Heart left ventricle (tissue), 16 donors: ENCODE measurements at regions of chr6 and their contacts with region 1.

Region 1: DNA sequence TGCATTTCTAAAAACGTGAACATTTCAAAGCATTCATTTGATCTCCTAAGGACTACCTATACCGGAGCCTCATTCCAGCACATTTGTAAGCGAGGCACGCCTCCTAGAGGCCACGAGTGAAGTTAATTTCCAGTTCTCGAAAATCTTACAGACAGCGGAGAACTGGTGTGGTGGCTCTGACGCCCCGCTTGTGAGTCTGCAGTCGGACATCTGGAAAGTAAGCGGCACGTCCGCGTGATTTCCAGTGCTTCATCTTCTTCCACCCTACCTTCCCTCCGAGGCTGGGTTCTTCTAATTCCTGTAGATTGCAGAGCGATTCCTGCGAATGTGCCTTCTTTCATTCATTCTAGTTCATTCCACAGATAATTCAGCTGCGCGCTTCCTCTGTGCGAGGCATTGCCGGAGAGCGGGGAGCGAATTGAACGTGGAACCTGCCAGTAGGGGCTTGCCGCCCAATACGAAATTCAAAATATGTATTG is 810 bp upstream of the PRIM2 start:
- DNase-seq: peak; percentile 77 to 85 (median 81)
- ATAC-seq: peak; percentile 88 to 96 (median 93)
- H3K4me3 ChIP-seq: peak overlapping the region; percentile 57 to 76 (median 69)
- H3K27ac ChIP-seq: peak overlapping the region in 11 of 12 donors; percentile 11 to 74 (median 61)
- H3K4me1 ChIP-seq: peaks cover 0 to 21% (median 9%) of the 10 kb centered on the region in 12 donors
- H3K27me3 ChIP-seq: no peaks in the 10 kb centered on the region
- CTCF ChIP-seq: peak; percentile 70 to 91 (median 79)
- POLR2A ChIP-seq: no peak

Region 2: GRCh38 chr6:56955171-56956045 is 361.2 kb before region 1 on chr6:
- intact Hi-C with region 1: loop called in 2 of 10 experiments (anchors 2 to 5 kb)
- DNase-seq: peak; percentile 73 to 87 (median 79)
- ATAC-seq: peak; percentile 72 to 86 (median 82)
- H3K4me3 ChIP-seq: peak overlapping the region; percentile 30 to 85 (median 58)
- H3K27ac ChIP-seq: peak overlapping the region in 2 of 12 donors; percentile 31 to 57
- H3K4me1 ChIP-seq: peaks cover 0 to 22% (median 7%) of the 10 kb centered on the region in 12 donors
- H3K27me3 ChIP-seq: peaks cover 0 to 36% (median 0%) of the 10 kb centered on the region in 9 donors
- CTCF ChIP-seq: peak; percentile 46 to 80 (median 65)
- POLR2A ChIP-seq: no peak

Region 3: DNA sequence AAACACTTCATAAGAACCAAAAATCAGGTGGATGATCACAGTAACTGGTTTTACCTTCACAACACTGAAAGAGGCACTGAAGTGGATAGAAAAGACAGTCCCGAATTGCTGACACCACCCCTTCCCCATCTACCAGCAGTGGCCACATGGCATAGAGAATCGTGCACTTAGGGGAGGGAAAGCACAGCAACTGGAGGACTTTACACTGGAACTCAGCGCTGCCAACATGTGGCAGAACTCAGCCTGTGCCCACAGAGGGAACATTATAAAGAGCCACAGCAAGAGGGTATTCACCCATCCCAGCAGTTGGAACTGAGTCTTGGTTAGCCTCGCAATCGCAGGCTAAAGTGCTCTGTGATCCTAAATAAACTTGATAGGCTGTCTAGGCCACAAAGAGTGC is 276.6 kb before region 1 on chr6:
- intact Hi-C with region 1: loop called in 1 of 10 experiments (anchors 10 kb)
- DNase-seq: no peak
- ATAC-seq: no peak
- H3K4me3 ChIP-seq: no peak overlapping the region
- H3K27ac ChIP-seq: no peak overlapping the region
- H3K4me1 ChIP-seq: no peaks in the 10 kb centered on the region
- H3K27me3 ChIP-seq: peaks cover 0 to 12% (median 0%) of the 10 kb centered on the region in 9 donors
- CTCF ChIP-seq: no peak
- POLR2A ChIP-seq: no peak

Region 4: GRCh38 chr6:57172136-57173055 is 144.2 kb before region 1 on chr6 and contains the start of gene BAG2:
- intact Hi-C with region 1: loop called in 5 of 10 experiments (anchors 5 to 10 kb)
- DNase-seq: peak; percentile 86 to 93 (median 91)
- ATAC-seq: peak; percentile 71 to 97 (median 95)
- H3K4me3 ChIP-seq: peak within 1 kb of the TSS; percentile 55 to 86 (median 78)
- H3K27ac ChIP-seq: peak within 1 kb of the TSS; percentile 31 to 97 (median 92)
- H3K4me1 ChIP-seq: peaks cover 0 to 32% (median 12%) of the 10 kb centered on the region in 12 donors
- H3K27me3 ChIP-seq: no peaks in the 10 kb centered on the region
- CTCF ChIP-seq: peak in 9 of 12 donors; percentile 9 to 50 (median 23)
- POLR2A ChIP-seq: peak in 1 of 2 donors; percentile 84
- total RNA-seq, gene BAG2: 8.2 to 18.0 (median 11.6) TPM

Region 5: GRCh38 chr6:57207141-57207540 is 109.5 kb before region 1 on chr6:
- intact Hi-C with region 1: no loop called
- DNase-seq: no peak
- ATAC-seq: no peak
- H3K4me3 ChIP-seq: no peak overlapping the region
- H3K27ac ChIP-seq: peak overlapping the region in 1 of 12 donors; percentile 57
- H3K4me1 ChIP-seq: no peaks in the 10 kb centered on the region
- H3K27me3 ChIP-seq: no peaks in the 10 kb centered on the region
- CTCF ChIP-seq: no peak
- POLR2A ChIP-seq: no peak

Region 6: DNA sequence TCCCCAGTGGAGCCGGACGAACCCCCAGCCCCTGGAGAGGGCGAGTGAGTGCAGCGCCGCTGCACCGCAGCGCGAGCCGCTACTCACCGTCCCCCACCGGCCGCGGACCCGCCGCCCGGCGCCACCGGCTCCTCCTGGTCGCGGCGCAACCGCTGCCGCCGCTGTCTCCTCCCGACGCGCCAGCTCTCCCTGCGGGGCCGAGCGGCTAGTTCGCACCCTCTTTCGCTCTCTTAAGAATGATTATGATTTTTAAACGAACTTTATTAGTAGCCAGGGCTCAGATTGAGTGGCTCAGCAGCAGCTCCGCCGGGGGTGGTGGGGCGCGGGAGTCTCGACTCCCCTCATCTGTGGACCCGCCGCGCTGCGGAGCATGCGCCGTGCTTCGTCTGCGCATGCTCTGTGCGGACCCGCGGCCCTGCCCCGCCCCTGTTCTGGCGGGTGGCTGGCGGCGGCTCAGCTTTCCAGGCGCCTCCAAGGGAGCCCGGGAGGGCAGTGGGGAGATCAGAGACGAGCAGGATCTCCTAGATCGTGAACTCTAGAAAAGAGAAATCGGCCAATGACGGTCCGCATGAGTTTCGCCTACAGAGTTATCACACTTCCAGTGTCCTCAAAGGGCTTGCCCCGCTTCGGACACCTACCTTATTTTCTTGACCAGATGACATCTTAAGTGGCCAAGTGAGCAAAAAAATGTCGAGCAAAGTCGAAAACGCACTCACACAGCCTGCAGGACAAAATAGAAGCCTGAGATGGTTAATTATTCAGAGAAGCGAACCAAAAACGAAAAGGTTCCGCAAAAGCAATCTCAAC is 94.5 kb before region 1 on chr6 and contains the start of gene RAB23:
- intact Hi-C with region 1: loop called in 3 of 10 experiments (anchors 5 kb)
- DNase-seq: peak; percentile 84 to 94 (median 89)
- ATAC-seq: peak; percentile 98 to 99 (median 98)
- H3K4me3 ChIP-seq: peak within 1 kb of the TSS; percentile 64 to 98 (median 86)
- H3K27ac ChIP-seq: peak within 1 kb of the TSS; percentile 14 to 96 (median 84)
- H3K4me1 ChIP-seq: peaks cover 0 to 15% (median 3%) of the 10 kb centered on the region in 12 donors
- H3K27me3 ChIP-seq: no peaks in the 10 kb centered on the region
- CTCF ChIP-seq: peak in 2 of 12 donors; percentile 5 to 34
- POLR2A ChIP-seq: peak in 1 of 2 donors; percentile 86
- total RNA-seq, gene RAB23: 7.6 to 15.4 (median 9.6) TPM

Region 7: DNA sequence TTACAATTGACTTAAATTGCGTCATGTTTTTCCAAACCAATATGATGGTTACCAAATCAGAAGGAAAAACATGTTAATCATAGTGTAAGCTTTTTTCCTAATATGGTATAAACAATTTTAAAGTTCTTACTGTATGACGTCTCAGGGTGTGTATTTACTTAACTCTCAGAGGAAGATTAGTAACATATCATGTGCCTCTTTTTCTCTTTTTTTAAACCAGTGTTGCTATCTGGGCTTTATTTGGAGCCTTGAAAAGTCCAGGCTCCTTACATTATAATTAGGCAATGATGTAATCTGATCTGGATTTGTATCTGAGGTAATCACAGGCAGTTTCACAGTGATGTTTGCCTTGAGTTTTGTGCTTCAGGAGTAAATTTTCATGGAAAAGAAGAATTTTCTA is 74.1 kb before region 1 on chr6:
- intact Hi-C with region 1: no loop called
- DNase-seq: no peak
- ATAC-seq: peak in 3 of 4 donors; percentile 39 to 78 (median 59)
- H3K4me3 ChIP-seq: no peak overlapping the region
- H3K27ac ChIP-seq: peak overlapping the region in 2 of 12 donors; percentile 6 to 14
- H3K4me1 ChIP-seq: peaks cover 0 to 5% (median 0%) of the 10 kb centered on the region in 12 donors
- H3K27me3 ChIP-seq: no peaks in the 10 kb centered on the region
- CTCF ChIP-seq: no peak
- POLR2A ChIP-seq: no peak

Region 8: GRCh38 chr6:57276946-57277345 is 39.7 kb before region 1 on chr6:
- intact Hi-C with region 1: no loop called
- DNase-seq: no peak
- ATAC-seq: no peak
- H3K4me3 ChIP-seq: no peak overlapping the region
- H3K27ac ChIP-seq: no peak overlapping the region
- H3K4me1 ChIP-seq: no peaks in the 10 kb centered on the region
- H3K27me3 ChIP-seq: peaks cover 0 to 3% (median 0%) of the 10 kb centered on the region in 9 donors
- CTCF ChIP-seq: no peak
- POLR2A ChIP-seq: no peak